Gastrocnemius medialis (tissue), 4 donors: ENCODE measurements at regions of chr19 and their contacts with region 1.

Region 1: DNA sequence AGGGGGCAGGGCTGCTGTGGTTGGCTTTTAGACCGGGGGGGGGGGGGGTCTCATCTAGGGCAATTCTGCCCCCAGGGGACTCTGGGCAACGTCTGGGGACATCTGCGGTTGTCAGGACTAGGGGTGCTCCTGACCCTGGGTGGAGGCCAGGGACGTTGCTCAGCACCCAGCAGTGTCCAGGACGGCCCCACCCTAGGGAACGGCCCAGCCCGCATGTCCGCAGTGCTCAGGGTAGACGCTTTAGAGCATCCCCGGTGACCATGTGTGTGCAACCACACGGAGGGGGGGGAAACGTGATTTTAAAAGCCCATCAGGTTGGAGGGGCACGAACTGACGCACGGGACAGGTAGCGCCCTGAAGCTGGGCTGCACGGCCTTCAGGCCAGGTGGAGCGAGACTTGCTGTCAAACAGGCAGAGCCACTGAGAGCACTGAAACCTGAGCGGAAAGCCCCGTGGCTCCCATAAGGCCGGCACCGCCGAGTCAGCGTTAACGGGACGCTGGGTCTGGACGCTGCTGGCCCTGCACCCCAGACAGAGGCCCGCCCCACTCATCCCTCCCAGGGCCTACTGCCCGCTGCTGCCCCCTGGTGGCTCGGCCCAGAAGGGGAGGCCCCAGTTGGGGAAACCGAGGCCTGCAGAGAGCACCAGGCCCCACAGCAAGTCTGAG is 8.3 kb downstream of the CACTIN start:
- DNase-seq: peak in 1 of 2 donors; percentile 65
- ATAC-seq: peak; percentile 77
- H3K4me3 ChIP-seq: peak overlapping the region in 3 of 4 donors; percentile 25 to 31 (median 28)
- H3K27ac ChIP-seq: peak overlapping the region; percentile 5 to 65 (median 52)
- H3K4me1 ChIP-seq: peaks cover 0 to 4% of the 10 kb centered on the region in 2 donors
- H3K27me3 ChIP-seq: no peaks in the 10 kb centered on the region
- CTCF ChIP-seq: peak; percentile 87 to 96 (median 95)
- POLR2A ChIP-seq: no peak

Region 2: DNA sequence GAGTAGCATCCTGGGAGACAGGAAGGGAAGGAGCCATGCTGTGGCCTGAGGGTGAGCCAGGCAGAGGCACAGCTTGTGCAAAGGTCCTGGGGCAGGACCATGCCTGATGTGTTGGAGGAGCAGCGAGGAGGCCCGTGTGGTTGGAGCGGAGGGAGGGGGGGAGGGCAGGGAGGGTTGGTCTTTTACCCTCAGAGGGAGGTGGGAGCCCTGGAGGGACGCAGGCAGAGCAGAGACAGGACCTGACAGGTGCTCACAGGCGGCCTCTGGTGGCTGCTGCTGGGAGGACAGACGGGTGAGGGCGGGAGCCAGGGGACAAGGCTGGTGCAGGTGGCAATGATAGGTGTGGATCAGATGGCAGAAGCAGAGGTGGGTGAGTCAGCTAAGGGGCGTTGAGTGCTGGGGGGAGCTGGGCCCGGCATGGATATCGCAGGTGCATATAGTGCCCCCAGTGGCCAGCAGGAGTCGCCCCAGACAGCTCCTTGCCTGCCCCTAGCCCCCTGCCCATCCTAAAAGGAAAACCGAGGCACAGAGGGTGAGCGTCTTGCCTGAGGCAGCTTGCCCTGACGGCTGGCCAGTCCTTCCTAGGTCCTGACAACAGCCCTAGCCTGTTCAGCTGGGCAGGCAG is 492.3 kb before region 1 on chr19:
- in situ Hi-C with region 1: no loop called
- intact Hi-C with region 1: no loop called
- DNase-seq: peak in 1 of 2 donors; percentile 49
- ATAC-seq: peak; percentile 44 to 78
- H3K4me3 ChIP-seq: no peak overlapping the region
- H3K27ac ChIP-seq: no peak overlapping the region
- H3K4me1 ChIP-seq: no peaks in the 10 kb centered on the region
- H3K27me3 ChIP-seq: no peaks in the 10 kb centered on the region
- CTCF ChIP-seq: peak; percentile 51 to 82 (median 73)
- POLR2A ChIP-seq: no peak

Region 3: DNA sequence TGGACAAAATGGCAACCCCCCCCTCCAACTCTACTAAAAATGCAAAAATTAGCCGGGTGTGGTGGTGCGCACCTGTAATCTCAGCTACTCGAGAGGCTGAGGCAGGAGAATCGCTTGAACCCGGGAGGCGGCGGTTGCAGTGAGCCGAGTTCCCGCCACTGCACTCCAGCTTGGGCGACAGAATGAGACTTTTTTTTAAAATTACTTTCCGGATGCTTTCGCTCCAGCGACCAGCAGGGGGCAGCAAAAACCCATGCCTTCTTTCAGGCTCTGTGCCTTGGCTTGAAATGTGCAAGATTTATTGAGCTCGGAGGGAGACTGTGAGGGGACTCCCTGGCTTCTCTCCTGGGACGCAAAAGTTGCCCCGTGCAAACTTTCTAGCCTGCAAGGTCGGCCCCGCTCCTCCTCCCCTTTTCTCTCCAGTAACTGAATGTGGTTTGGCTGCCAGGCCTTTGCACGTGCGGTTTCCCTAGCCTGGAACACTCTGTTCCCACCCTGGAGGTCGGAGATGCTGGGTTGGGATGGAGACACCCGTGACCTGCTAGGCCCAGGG is 313.3 kb before region 1 on chr19:
- in situ Hi-C with region 1: no loop called
- intact Hi-C with region 1: loop called (anchors 5 kb)
- DNase-seq: peak; percentile 48 to 51
- ATAC-seq: peak; percentile 70 to 75
- H3K4me3 ChIP-seq: no peak overlapping the region
- H3K27ac ChIP-seq: no peak overlapping the region
- H3K4me1 ChIP-seq: peaks cover 3% of the 10 kb centered on the region in 2 donors
- H3K27me3 ChIP-seq: peaks cover 28 to 55% (median 46%) of the 10 kb centered on the region in 3 donors
- CTCF ChIP-seq: peak; percentile 86 to 93 (median 88)
- POLR2A ChIP-seq: no peak

Region 4: GRCh38 chr19:3544742-3545668 is 73.3 kb before region 1 on chr19:
- in situ Hi-C with region 1: no loop called
- intact Hi-C with region 1: loop called (anchors 2 kb)
- DNase-seq: peak; percentile 39 to 65
- ATAC-seq: peak; percentile 66 to 85
- H3K4me3 ChIP-seq: no peak overlapping the region
- H3K27ac ChIP-seq: no peak overlapping the region
- H3K4me1 ChIP-seq: no peaks in the 10 kb centered on the region
- H3K27me3 ChIP-seq: no peaks in the 10 kb centered on the region
- CTCF ChIP-seq: peak; percentile 86 to 96 (median 95)
- POLR2A ChIP-seq: no peak

Region 5: DNA sequence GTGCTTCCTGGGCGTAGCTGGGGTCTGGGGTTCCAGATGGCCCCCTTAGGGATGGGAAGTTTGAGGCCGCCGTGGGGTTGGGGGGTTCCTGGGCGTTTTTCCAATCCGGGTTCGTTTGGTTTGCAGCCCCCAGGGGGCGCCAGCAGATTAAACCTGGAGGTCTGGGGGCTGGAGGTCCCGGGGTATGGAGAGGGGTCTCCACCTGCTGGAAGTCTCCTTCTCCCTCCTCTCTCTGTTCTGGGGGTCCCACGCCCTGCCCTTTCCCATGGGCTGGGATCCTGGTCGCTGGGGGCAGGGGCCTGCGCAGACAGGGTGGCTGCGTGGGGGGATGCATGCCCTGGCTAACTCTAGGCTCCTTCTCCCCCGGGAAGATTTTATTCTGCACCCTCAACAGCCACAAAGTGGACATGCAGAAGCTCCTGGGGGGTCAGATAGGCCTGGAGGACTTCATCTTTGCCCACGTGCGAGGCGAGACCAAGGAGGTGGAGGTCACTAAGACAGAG is 32.1 kb before region 1 on chr19:
- in situ Hi-C with region 1: no loop called
- intact Hi-C with region 1: loop called (anchors 2 kb)
- DNase-seq: no peak
- ATAC-seq: peak in 1 of 2 donors; percentile 14
- H3K4me3 ChIP-seq: peak overlapping the region; percentile 16 to 50 (median 36)
- H3K27ac ChIP-seq: peak overlapping the region in 1 of 4 donors; percentile 28
- H3K4me1 ChIP-seq: peaks cover 10 to 11% of the 10 kb centered on the region in 2 donors
- H3K27me3 ChIP-seq: peaks cover 12 to 15% (median 15%) of the 10 kb centered on the region in 3 donors
- CTCF ChIP-seq: peak; percentile 30 to 56 (median 52)
- POLR2A ChIP-seq: no peak

Region 6: DNA sequence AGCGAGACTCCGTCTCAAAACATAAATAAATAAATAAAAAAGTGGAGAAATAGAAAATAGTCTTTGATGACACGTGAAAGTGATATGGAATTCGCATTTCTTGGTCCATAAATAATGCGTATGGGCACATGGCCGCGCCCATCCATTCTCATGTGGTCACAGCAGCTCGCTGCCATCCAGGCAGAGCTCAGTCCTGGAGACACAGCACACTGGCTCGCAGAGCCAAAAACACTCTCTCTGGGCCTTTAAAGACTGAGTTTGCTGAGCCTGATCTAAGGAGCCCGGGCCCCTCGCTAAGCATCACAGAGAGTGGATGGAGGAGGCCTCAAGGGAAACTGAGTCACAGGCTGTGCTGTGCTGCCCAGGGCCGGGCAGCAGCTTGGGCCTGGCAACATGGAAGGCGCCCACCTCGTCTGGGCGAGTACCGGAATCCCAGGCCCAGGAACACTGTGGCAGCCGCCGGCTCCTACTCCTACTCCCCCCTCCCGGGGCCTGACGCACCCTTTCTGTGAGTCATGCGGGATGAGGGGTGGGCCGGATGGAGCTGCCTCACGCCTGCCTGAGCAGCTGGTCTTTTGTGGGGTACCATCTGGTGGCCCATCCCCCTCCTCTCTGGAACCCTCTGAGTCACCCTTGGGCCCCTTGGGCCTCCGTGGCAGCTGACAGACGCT is 37.3 kb after region 1 on chr19:
- in situ Hi-C with region 1: no loop called
- intact Hi-C with region 1: no loop called
- DNase-seq: no peak
- ATAC-seq: no peak
- H3K4me3 ChIP-seq: no peak overlapping the region
- H3K27ac ChIP-seq: no peak overlapping the region
- H3K4me1 ChIP-seq: peaks cover under 1 to 1% of the 10 kb centered on the region in 2 donors
- H3K27me3 ChIP-seq: no peaks in the 10 kb centered on the region
- CTCF ChIP-seq: no peak
- POLR2A ChIP-seq: no peak

Region 7: DNA sequence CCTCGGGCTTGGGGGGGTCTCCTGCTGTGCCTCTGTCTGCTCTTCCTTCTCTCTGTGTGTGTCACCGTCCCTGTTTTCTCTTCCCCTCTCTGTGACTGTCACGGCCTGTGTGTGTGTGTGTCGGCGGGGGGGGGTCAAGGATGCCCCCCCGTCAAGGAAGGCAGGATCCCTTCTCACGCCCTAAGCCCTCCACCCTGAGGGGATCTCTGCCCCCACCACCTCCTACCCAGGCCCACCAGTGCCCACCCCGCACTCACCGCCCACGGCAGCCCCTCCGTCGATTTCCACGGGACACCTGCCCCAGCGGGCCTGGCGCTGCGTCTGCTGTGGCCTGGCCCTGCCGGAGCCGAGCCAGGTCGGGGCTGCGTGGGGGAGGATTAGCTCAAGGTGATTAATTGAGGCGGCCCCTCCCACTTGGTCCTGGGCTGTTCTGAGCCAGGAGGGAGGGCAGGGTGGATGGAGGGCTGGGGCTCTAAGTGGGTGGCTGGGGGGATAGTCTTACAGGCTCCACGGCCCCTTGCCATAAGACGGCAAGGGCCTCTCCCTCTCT is 153.7 kb after region 1 on chr19 and contains the start of gene RAX2:
- in situ Hi-C with region 1: no loop called
- intact Hi-C with region 1: no loop called
- DNase-seq: no peak
- ATAC-seq: no peak
- H3K4me3 ChIP-seq: no peak within 1 kb of the TSS
- H3K27ac ChIP-seq: no peak within 1 kb of the TSS
- H3K4me1 ChIP-seq: no peaks in the 10 kb centered on the region
- H3K27me3 ChIP-seq: no peaks in the 10 kb centered on the region
- CTCF ChIP-seq: no peak
- POLR2A ChIP-seq: no peak
- total RNA-seq, gene RAX2: not detected